PC-9 (cell line): ENCODE measurements at regions of chr7 and their contacts with region 1.

Region 1: DNA sequence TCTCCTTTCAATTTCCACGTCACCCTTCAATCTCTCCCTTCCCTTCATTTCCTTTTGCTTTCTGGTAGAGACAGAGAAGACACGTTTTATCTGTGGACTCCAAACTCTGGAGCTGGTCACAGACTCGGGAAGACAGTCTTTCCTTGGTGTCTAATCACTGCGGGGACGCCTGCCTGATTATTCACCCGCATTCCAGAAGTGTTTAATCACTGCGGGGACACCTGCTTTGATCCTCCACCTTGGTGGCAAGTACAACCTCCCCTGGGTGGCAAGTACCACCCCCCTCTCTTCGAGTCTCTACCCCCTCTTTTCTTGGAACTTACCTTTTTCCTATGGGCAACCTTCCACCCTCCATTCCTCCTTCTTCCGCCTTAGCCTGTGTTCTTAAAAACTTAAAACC is 15.3 kb upstream of the LRRC61 start:
- DNase-seq: peak; percentile 77 to 89
- H3K4me3 ChIP-seq: peak overlapping the region; percentile 0; the same call in 1 of the 2 replicates
- H3K27ac ChIP-seq: peak overlapping the region; percentile 91
- H3K4me1 ChIP-seq: peaks cover 91% of the 10 kb centered on the region
- H3K27me3 ChIP-seq: no peaks in the 10 kb centered on the region
- CTCF ChIP-seq: no peak

Region 2: DNA sequence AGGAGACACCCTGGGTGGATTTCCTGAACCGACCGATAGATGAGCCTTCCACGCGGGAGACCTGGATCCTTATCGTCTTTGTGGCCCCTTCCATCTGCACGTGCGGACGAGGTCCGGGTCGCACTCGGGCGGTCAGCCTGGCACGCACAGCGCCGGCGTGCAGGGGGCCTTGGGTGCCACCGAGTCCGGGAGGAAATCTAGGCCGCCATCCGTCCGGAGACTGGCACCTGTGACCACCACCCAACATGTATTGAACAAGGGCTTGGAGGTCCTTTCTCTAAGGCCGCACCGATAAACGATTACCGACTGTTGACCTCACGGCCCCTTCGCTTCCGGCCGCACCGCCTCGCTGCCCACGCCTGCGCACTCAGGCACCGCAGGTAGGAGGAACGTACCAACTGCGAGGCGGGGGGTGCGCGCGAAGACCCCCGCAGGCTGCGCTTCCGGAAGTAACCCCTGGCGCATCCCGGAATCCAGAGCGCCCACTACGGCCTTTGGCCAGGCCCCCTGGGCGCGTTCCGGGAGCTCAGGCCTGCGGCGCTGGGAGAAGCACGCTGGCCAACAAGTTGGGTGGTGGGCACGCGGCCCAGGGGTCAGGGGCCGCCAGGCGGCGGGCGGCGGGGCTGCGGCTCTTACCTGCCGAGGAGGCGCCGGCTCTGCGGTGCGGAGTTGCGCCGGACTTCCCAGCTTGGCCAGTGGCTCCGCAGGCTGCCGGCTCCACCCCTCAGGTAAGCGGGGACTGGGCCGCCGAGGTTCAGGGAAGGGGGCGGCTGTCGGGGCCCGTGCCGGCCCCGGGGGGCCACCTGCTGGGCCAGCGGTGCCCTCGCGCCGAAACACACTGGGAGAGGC is 15.2 kb after region 1 on chr7 and contains the starts of genes ACTR3C and LRRC61:
- CTCF ChIA-PET with region 1: no interaction called
- POLR2A ChIA-PET with region 1: no interaction called
- intact Hi-C with region 1: loop called (anchors 1 kb)
- DNase-seq: peak; percentile 69 to 73
- H3K4me3 ChIP-seq: peak within 1 kb of the TSS; percentile 98
- H3K27ac ChIP-seq: peak within 1 kb of the TSS; percentile 83
- H3K4me1 ChIP-seq: peaks cover 54% of the 10 kb centered on the region
- H3K27me3 ChIP-seq: no peaks in the 10 kb centered on the region
- CTCF ChIP-seq: peak; percentile 42; the same call in 1 of the 2 replicates
- total RNA-seq, gene ACTR3C: 24.1 and 34.5 TPM in 2 replicates
- total RNA-seq, gene LRRC61: 34.8 and 42.3 TPM in 2 replicates

Region 3: GRCh38 chr7:150388709-150389531 is 81.0 kb after region 1 on chr7:
- CTCF ChIA-PET with region 1: no interaction called
- POLR2A ChIA-PET with region 1: no interaction called
- intact Hi-C with region 1: no loop called
- DNase-seq: no peak
- H3K4me3 ChIP-seq: no peak overlapping the region
- H3K27ac ChIP-seq: no peak overlapping the region
- H3K4me1 ChIP-seq: no peaks in the 10 kb centered on the region
- H3K27me3 ChIP-seq: no peaks in the 10 kb centered on the region
- CTCF ChIP-seq: no peak